Naive thymus-derived CD4-positive, alpha-beta T cell (primary cell): ENCODE measurements at regions of chr2 and their contacts with region 1.

Region 1: GRCh38 chr2:200811336-200812121 is at the start of gene BZW1:
- DNase-seq: peak; percentile 92 to 99 (median 98)
- ATAC-seq: peak; percentile 91
- H3K4me3 ChIP-seq: peak within 1 kb of the TSS; percentile 89
- H3K4me3 Mint-ChIP-seq: peak within 1 kb of the TSS; percentile 89 to 99 (median 98)
- H3K27ac ChIP-seq: peak within 1 kb of the TSS; percentile 99
- H3K27ac Mint-ChIP-seq: peak within 1 kb of the TSS; percentile 91 to 99 (median 98)
- H3K4me1 ChIP-seq: peaks cover 19 to 24% of the 10 kb centered on the region in 2 donors
- H3K4me1 Mint-ChIP-seq: peaks cover 30 to 56% (median 48%) of the 10 kb centered on the region in 7 donors
- H3K27me3 ChIP-seq: no peaks in the 10 kb centered on the region
- H3K27me3 Mint-ChIP-seq: peaks cover 0 to 2% (median 0%) of the 10 kb centered on the region in 5 donors
- total RNA-seq, gene BZW1: 127 to 246 (median 207) TPM

Region 2: GRCh38 chr2:199911052-199911876 is 900.3 kb before region 1 on chr2 and contains the start of gene C2orf69:
- CTCF ChIA-PET with region 1: no interaction called
- POLR2A ChIA-PET with region 1: no interaction called
- intact Hi-C with region 1: loop called (anchors 1 kb)
- DNase-seq: peak; percentile 80 to 92 (median 83)
- ATAC-seq: peak; percentile 93
- H3K4me3 ChIP-seq: peak within 1 kb of the TSS; percentile 75
- H3K4me3 Mint-ChIP-seq: peak within 1 kb of the TSS; percentile 89 to 100 (median 98)
- H3K27ac ChIP-seq: peak within 1 kb of the TSS; percentile 89
- H3K27ac Mint-ChIP-seq: peak within 1 kb of the TSS; percentile 72 to 95 (median 94)
- H3K4me1 ChIP-seq: peaks cover 11 to 19% of the 10 kb centered on the region in 2 donors
- H3K4me1 Mint-ChIP-seq: peaks cover 26 to 47% (median 37%) of the 10 kb centered on the region in 7 donors
- H3K27me3 ChIP-seq: no peaks in the 10 kb centered on the region
- H3K27me3 Mint-ChIP-seq: peaks cover 0 to 14% (median 8%) of the 10 kb centered on the region in 5 donors
- total RNA-seq, gene C2orf69: 10.1 to 15.4 (median 12.7) TPM

Region 3: GRCh38 chr2:199955339-199956261 is 855.9 kb before region 1 on chr2 and contains the starts of genes MAIP1 and TYW5:
- CTCF ChIA-PET with region 1: no interaction called
- POLR2A ChIA-PET with region 1: no interaction called
- intact Hi-C with region 1: loop called (anchors 1 kb)
- DNase-seq: peak; percentile 69 to 85 (median 79)
- ATAC-seq: peak; percentile 93
- H3K4me3 ChIP-seq: peak within 1 kb of the TSS; percentile 95
- H3K4me3 Mint-ChIP-seq: peak within 1 kb of the TSS; percentile 96 to 99 (median 98)
- H3K27ac ChIP-seq: peak within 1 kb of the TSS; percentile 84
- H3K27ac Mint-ChIP-seq: peak within 1 kb of the TSS; percentile 93 to 98 (median 95)
- H3K4me1 ChIP-seq: peaks cover 27 to 34% of the 10 kb centered on the region in 2 donors
- H3K4me1 Mint-ChIP-seq: peaks cover 31 to 72% (median 59%) of the 10 kb centered on the region in 7 donors
- H3K27me3 ChIP-seq: no peaks in the 10 kb centered on the region
- H3K27me3 Mint-ChIP-seq: no peaks in the 10 kb centered on the region
- total RNA-seq, gene MAIP1: 14.5 to 27.8 (median 19.8) TPM
- total RNA-seq, gene TYW5: 6.3 to 13.3 (median 11.2) TPM

Region 4: DNA sequence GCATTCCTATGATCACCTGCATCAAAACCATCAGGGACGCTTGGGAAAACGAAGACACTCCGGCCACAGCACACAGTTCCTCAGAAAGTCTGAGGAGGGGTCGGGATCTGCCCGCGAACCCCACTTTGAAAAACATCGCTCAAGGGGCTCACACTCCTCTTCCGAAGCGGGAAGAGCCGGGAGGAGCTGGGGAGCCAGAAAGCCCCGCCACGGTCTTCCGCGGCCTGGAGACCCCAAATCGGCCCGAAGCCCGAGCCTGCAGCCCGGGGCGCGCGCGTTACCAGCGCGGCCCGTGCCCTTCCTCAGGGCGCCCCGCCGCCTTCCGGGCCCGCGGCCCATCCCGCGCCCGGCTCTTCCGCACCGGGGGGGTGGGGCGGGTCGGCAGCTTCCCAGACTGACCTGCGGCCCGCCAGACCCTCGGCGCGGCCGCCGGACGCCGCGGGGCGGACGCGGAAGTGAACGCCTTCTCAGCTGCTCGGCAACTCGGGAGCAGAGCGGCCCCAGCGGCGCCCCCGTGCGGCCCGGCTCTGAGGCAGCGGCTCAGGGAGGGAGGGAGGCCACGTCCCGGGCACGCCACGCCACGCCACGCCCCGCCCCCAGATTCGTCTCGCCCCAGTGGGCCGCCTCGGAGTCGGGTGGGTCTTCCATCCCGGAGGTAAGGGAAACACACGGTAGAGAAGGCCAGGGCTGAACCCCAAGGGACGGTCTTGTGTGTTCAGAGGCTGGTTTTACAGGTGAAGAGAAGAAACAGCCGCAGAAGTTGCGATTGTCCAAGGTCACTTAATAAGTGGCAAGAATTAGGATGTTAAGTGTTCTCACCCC is 301.7 kb before region 1 on chr2 and contains the start of gene KCTD18:
- CTCF ChIA-PET with region 1: no interaction called
- POLR2A ChIA-PET with region 1: no interaction called
- intact Hi-C with region 1: loop called (anchors 5 kb)
- DNase-seq: peak; percentile 82 to 93 (median 87)
- ATAC-seq: peak; percentile 100
- H3K4me3 ChIP-seq: peak within 1 kb of the TSS; percentile 53
- H3K4me3 Mint-ChIP-seq: peak within 1 kb of the TSS; percentile 83 to 98 (median 94)
- H3K27ac ChIP-seq: peak within 1 kb of the TSS; percentile 74
- H3K27ac Mint-ChIP-seq: peak within 1 kb of the TSS; percentile 88 to 97 (median 95)
- H3K4me1 ChIP-seq: peaks cover 6 to 22% of the 10 kb centered on the region in 2 donors
- H3K4me1 Mint-ChIP-seq: peaks cover 10 to 51% (median 34%) of the 10 kb centered on the region in 7 donors
- H3K27me3 ChIP-seq: no peaks in the 10 kb centered on the region
- H3K27me3 Mint-ChIP-seq: no peaks in the 10 kb centered on the region
- total RNA-seq, gene KCTD18: 14.9 to 20.8 (median 18.6) TPM

Region 5: GRCh38 chr2:200578778-200579177 is 232.8 kb before region 1 on chr2:
- CTCF ChIA-PET with region 1: no interaction called
- POLR2A ChIA-PET with region 1: no interaction called
- intact Hi-C with region 1: loop called in 1 of 2 experiments (anchors 10 kb)
- DNase-seq: peak in 4 of 9 donors; percentile 3 to 13 (median 10)
- ATAC-seq: peak; percentile 64
- H3K4me3 ChIP-seq: no peak overlapping the region
- H3K4me3 Mint-ChIP-seq: no peak overlapping the region
- H3K27ac ChIP-seq: no peak overlapping the region
- H3K27ac Mint-ChIP-seq: no peak overlapping the region
- H3K4me1 ChIP-seq: no peaks in the 10 kb centered on the region
- H3K4me1 Mint-ChIP-seq: peaks cover 0 to 15% (median 0%) of the 10 kb centered on the region in 7 donors
- H3K27me3 ChIP-seq: no peaks in the 10 kb centered on the region
- H3K27me3 Mint-ChIP-seq: peaks cover 0 to 5% (median 4%) of the 10 kb centered on the region in 5 donors

Region 6: GRCh38 chr2:200888704-200889625 is 77.4 kb after region 1 on chr2 and contains the starts of genes NIF3L1 and PPIL3:
- CTCF ChIA-PET with region 1: no interaction called
- POLR2A ChIA-PET with region 1: interaction called, 16 read pairs
- intact Hi-C with region 1: loop called (anchors 1 kb)
- DNase-seq: peak; percentile 88 to 97 (median 95)
- ATAC-seq: peak; percentile 89
- H3K4me3 ChIP-seq: peak within 1 kb of the TSS; percentile 83
- H3K4me3 Mint-ChIP-seq: peak within 1 kb of the TSS; percentile 88 to 100 (median 96)
- H3K27ac ChIP-seq: peak within 1 kb of the TSS; percentile 86
- H3K27ac Mint-ChIP-seq: peak within 1 kb of the TSS; percentile 97 to 100 (median 100)
- H3K4me1 ChIP-seq: peaks cover 23 to 26% of the 10 kb centered on the region in 2 donors
- H3K4me1 Mint-ChIP-seq: peaks cover 35 to 75% (median 60%) of the 10 kb centered on the region in 7 donors
- H3K27me3 ChIP-seq: no peaks in the 10 kb centered on the region
- H3K27me3 Mint-ChIP-seq: no peaks in the 10 kb centered on the region
- total RNA-seq, gene NIF3L1: 11.5 to 33.9 (median 31.4) TPM
- total RNA-seq, gene PPIL3: 28.5 to 69.7 (median 49.1) TPM

Region 7: GRCh38 chr2:202033321-202034248 is 1222.1 kb after region 1 on chr2 and contains the start of gene FZD7:
- CTCF ChIA-PET with region 1: no interaction called
- POLR2A ChIA-PET with region 1: no interaction called
- intact Hi-C with region 1: loop called in 1 of 2 experiments (anchors 2 kb)
- DNase-seq: peak; percentile 70 to 87 (median 81)
- ATAC-seq: peak; percentile 92
- H3K4me3 ChIP-seq: peak within 1 kb of the TSS; percentile 91
- H3K4me3 Mint-ChIP-seq: peak within 1 kb of the TSS in 9 of 10 donors; percentile 87 to 96 (median 92)
- H3K27ac ChIP-seq: peak within 1 kb of the TSS; percentile 44
- H3K27ac Mint-ChIP-seq: peak within 1 kb of the TSS in 8 of 9 donors; percentile 46 to 83 (median 72)
- H3K4me1 ChIP-seq: peaks cover 9 to 11% of the 10 kb centered on the region in 2 donors
- H3K4me1 Mint-ChIP-seq: peaks cover 6 to 17% (median 14%) of the 10 kb centered on the region in 7 donors
- H3K27me3 ChIP-seq: peaks cover 6 to 22% of the 10 kb centered on the region in 2 donors
- H3K27me3 Mint-ChIP-seq: peaks cover 0 to 45% (median 7%) of the 10 kb centered on the region in 5 donors
- total RNA-seq, gene FZD7: 0.27 to 0.99 (median 0.43) TPM